ENCODE measurements at regions of chr10 and their contacts with region 1.

Region 1: GRCh38 chr10:47311932-47312662 is 10.2 kb upstream of the GDF2 start:
- DNase-seq: peak; percentile 36 to 92
- H3K4me3 ChIP-seq: no peak overlapping the region
- H3K27ac ChIP-seq: no peak overlapping the region
- H3K4me1 ChIP-seq: peaks cover 2% of the 10 kb centered on the region in 2 donors
- H3K27me3 ChIP-seq: no peaks in the 10 kb centered on the region
- CTCF ChIP-seq: peak; percentile 91 to 97 (median 95)

Region 2: GRCh38 chr10:47047671-47048525 is 264.2 kb before region 1 on chr10:
- intact Hi-C with region 1: loop called (anchors 1 kb)
- DNase-seq: peak in 1 of 2 donors; percentile 85
- H3K4me3 ChIP-seq: no peak overlapping the region
- H3K27ac ChIP-seq: peak overlapping the region in 1 of 2 donors; percentile 82
- H3K4me1 ChIP-seq: peaks cover 7 to 20% of the 10 kb centered on the region in 2 donors
- H3K27me3 ChIP-seq: no peaks in the 10 kb centered on the region
- CTCF ChIP-seq: peak; percentile 83 to 94 (median 89)

Region 3: DNA sequence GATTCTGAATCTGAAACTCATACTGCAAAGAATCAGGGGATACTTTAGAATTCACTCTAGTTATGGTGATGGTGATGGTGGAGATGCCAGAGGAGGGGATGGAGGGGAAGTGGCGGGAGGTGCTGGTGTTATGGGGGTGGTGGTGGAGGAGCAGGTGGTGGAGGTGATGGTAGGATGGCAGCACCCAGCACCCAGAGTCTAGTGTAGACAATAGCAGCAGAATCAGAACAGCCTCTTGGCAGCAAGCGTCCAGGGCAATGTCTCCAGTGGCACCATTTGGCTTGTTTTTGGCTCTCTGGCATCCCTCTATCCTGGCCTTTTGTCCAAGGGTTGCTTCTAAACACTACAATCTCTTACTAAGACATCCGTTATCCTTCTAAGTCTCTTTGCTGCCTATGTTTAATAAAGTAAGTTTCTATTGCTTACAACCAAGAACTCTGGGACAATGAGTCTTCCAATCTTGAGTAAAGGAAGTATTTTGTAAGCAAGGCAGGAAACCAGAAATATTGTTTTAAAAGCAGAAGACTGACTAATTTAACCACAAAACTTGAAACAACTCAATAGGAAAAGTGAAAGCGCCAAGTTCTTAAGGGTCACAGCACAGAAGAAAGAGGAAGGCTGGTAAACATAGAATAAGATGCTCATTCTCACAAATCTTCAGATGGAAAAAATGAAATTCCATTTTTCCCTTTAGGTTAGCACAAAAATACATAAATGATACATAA is 54.5 kb before region 1 on chr10:
- intact Hi-C with region 1: no loop called
- DNase-seq: no peak
- H3K4me3 ChIP-seq: no peak overlapping the region
- H3K27ac ChIP-seq: no peak overlapping the region
- H3K4me1 ChIP-seq: peaks cover 6 to 22% of the 10 kb centered on the region in 2 donors
- H3K27me3 ChIP-seq: no peaks in the 10 kb centered on the region
- CTCF ChIP-seq: no peak

Measured in ascending aorta (tissue), 2 donors.